Left ventricle myocardium superior (tissue), 1 donor: ENCODE measurements at regions of chr9 and their contacts with region 1.

Region 1: DNA sequence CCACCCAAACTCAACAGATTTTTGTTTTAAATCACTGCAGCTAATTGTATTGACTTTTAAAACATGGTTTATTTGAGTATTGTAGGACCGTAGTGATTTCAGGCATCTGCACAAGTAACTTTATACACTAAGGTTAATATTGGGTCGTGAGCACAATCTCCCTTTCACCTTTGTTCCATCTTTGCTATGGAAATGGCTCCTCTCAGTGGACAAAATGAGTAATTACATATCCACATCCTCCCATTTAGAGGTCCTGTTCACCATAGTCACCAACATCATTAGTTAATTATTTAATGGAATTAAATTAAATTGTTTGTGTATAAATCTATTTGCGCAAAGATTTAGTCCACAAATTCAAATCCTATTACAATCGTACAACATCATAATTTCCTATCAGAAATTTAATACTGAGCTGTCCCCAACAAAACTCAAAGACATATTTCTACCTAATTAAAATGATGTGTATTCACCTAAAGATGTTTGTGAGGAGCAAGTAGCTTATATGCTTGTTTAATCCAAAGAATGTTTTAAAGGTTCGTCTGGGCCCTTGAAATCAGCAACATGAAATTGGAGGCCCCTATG is 173.0 kb upstream of the DAPK1 start:
- DNase-seq: no peak
- ATAC-seq: peak; percentile 85

Region 2: GRCh38 chr9:86434039-86434726 is 890.5 kb before region 1 on chr9:
- intact Hi-C with region 1: loop called (anchors 5 kb)
- DNase-seq: peak; percentile 30
- ATAC-seq: peak; percentile 65

Region 3: DNA sequence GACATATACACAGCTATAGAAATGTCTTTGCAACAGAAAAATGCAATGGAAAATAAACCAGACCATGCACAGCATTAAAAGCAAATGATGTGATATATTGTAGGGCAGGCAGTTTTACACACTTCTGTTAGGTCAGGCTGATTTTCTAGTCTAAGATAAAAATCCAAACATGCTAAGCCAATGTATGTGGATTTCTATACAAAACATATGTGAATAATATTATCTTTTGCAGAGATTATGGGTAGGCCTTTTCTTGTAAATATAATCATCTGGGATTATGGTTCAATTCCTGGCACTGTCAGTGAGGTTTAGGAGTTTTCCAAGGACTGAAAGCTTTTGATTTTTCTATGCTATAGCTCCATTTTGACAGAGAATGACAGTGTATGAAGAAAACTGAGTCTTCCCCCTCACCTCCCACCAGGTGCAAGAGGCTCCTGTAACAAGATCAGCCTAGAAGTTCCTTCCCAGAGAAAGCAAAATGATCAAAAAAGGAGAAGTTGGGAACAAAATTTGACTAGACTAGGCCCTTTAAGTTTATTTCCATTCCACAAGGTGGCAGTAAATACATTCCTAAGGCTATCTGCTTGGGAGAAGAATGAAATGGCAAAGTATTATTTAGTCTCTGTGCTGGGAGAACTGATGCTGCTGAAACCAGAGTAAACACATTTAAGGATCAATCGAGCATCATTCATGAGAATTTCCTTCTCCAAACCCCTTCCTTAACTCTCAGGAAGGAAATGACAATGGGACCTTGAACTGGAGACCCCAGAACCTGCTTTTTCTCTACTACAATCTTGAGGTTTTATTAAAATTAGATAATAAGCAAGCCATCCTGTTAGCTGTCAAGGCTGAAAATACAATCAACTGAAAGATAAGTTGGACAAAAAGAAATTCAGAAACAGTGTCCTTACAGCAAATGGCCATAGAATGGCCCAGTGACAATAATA is 837.5 kb before region 1 on chr9:
- intact Hi-C with region 1: loop called (anchors 2 kb)
- DNase-seq: no peak
- ATAC-seq: peak; percentile 80

Region 4: DNA sequence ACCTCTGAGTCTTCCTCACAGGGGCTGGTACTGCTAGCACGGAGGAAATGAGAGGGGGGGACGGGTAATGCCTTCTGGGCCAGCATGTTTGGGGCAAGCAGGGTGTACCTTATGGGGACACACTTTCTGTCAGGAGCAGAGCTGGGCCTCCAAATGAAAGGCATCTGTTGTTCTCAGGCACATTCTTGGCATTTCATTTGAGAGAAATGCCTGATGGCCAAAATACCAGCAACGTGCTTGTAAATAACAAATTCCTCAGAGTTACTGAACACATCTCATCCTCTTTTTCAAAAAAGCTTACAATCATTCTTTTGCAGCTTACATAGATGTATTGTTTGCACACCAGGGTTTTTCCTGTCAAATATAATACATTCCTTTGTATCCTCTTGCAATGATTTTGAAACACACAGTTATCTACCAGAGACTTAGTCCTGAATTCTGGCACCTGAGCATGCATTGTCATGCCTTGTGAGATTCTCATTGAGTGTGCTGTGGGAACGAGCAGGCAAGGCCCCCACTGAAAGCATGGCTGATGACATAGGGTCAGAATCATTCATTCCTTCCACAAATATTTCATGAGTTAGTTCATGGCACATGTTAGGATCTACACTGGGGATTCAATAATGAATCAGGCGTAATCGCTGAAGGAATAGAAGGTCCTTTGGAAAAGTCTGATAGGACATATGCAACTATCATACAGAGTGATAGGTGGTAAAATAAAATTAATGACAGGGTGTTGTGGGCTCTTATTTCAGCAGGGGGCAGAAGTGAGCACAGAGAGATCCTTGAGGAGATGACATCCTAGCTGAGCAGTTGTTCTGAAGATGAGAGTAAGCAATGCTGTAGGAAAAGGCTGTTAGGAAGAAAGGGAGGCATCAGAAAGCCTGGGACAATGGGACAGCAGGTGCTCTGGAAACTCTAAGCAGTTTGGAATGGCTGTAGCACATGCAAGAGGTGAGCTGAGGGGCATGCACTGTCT is 709.5 kb before region 1 on chr9:
- intact Hi-C with region 1: loop called (anchors 10 kb)
- DNase-seq: no peak
- ATAC-seq: peak; percentile 51